GM12878 (cell line): ENCODE measurements at regions of chr17 and their contacts with region 1.

Region 1: GRCh38 chr17:78140169-78140976 is 5.8 kb upstream of the C17orf99 start:
- DNase-seq: peak; percentile 90
- ATAC-seq: peak; percentile 90
- H3K4me3 ChIP-seq: no peak overlapping the region
- H3K27ac ChIP-seq: no peak overlapping the region
- H3K4me1 ChIP-seq: peaks cover 64% of the 10 kb centered on the region
- H3K27me3 ChIP-seq: no peaks in the 10 kb centered on the region
- CTCF ChIP-seq: no peak
- EP300 ChIP-seq: no peak
- POLR2A ChIP-seq: peak; percentile 87
- RAD21 ChIP-seq: no peak

Region 2: DNA sequence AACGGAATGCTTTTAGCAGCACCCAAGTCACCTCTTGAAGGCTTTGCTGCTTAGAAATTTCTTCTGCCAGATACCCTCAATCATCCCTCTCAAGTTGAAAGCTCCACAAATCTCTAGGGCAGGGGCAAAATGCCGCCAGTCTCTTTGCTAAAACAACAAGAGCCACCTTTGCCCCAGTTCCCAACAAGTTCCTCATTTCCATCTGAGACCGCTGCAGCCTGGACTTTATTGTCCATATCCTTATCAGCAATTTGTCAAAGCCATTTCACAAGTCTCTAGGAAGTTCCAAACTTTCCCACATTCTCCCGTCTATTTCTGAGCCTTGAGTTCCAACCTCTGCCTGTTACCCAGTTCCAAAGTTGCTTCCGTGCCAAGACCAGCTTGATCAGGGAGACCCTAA is 39.3 kb before region 1 on chr17:
- CTCF ChIA-PET with region 1: no interaction called
- POLR2A ChIA-PET with region 1: no interaction called
- RAD21 ChIA-PET with region 1: no interaction called
- SMC1A ChIA-PET with region 1: no interaction called
- in situ Hi-C with region 1: no loop called
- intact Hi-C with region 1: no loop called
- DNase-seq: no peak
- ATAC-seq: no peak
- H3K4me3 ChIP-seq: no peak overlapping the region
- H3K27ac ChIP-seq: no peak overlapping the region
- H3K4me1 ChIP-seq: no peaks in the 10 kb centered on the region
- H3K27me3 ChIP-seq: no peaks in the 10 kb centered on the region
- CTCF ChIP-seq: no peak
- EP300 ChIP-seq: no peak
- POLR2A ChIP-seq: no peak
- RAD21 ChIP-seq: no peak

Region 3: DNA sequence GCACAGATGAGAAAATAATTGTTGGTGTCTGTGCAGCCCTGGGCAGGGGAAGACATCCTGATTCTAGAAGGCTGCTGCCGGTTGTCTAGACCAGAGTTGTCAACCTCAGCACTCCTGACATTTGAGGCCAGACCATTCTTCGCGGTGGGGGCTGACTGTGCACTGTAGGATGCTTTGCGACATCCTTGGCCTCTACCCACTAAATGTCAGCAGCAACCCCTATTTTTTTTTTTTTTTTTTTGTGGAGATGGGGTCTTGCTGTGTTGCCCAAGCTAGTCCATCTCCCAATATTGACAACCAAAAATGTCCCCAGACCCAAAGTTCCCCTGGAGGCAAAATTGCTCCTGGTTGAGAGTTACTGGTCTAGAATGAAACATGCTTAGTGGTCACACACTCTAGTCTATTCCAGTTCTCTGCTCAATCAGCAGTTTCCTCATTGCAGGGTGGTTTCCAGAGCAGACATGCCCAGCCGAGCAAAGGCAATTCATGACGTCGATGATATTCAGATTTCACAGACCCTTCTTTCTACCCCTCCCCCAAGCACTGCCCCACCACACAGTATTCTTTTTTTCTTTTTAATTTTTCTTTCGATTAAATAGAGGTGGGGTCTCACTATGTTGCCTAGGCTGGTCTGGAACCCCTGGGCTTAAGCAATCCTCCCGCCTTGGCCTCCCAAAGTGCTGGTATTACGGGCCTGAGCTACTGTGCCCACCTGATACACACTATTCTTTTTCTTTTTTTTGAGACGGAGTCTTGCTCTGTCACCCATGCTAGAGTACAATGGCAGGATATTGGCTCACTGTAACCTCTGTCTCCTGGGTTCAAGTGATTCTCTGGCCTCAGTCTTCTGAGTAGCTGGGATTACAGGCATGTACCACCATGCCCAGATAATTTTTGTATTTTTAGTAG is 14.8 kb after region 1 on chr17:
- CTCF ChIA-PET with region 1: interaction called, 9 read pairs
- POLR2A ChIA-PET with region 1: interaction called, 15 read pairs
- RAD21 ChIA-PET with region 1: interaction called, 29 read pairs
- SMC1A ChIA-PET with region 1: interaction called, 7 read pairs
- in situ Hi-C with region 1: no loop called
- intact Hi-C with region 1: no loop called
- DNase-seq: peak; percentile 97
- ATAC-seq: peak; percentile 80
- H3K4me3 ChIP-seq: no peak overlapping the region
- H3K27ac ChIP-seq: peak overlapping the region; percentile 93
- H3K4me1 ChIP-seq: peaks cover 64% of the 10 kb centered on the region
- H3K27me3 ChIP-seq: no peaks in the 10 kb centered on the region
- CTCF ChIP-seq: no peak
- EP300 ChIP-seq: peak; percentile 61 to 88; a peak in 3 of 4 replicates
- POLR2A ChIP-seq: peak; percentile 76
- RAD21 ChIP-seq: no peak

Region 4: DNA sequence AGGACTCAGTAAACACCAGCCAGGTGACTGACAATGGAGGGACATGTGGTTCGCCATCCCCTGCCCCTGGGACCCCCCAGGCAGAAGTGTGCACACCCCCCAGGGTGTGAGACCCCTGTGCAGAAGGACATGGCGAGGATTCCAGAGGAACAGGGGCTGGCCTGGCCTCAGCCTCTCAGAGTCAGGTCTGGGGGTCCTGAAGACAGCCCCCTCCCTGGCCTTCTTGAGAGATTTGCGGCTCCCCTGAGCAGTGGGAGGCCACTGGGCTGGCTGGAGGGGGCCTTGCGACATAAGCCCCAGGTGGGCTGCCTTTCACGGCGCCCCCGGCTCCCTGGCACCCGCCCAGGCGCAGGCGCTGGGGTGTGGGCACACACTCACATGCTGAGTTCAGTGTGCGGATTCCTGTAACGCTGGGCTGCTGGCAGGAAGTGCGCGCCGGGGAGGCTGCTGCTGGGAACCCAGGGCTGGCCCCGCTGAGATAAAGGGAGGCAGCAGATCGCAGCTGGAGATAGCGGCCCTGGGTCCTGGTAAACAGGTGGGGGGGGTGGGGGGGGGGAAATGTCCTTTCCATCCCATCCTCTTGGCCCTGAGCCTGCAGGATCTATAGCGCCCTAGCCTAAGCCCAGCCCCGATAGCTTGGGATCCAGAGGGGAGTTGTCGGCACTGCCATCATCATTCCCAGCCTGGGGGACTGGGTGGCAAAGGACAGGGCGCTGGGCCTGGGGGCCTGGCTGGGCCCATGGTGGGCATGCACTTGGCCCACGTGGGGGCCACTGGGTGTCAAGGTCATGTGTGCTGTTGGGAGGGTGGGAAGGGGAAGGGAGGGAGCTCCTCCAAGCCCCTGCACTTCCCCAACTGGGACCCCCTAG is 118.2 kb after region 1 on chr17:
- CTCF ChIA-PET with region 1: no interaction called
- POLR2A ChIA-PET with region 1: no interaction called
- RAD21 ChIA-PET with region 1: no interaction called
- SMC1A ChIA-PET with region 1: no interaction called
- in situ Hi-C with region 1: no loop called
- intact Hi-C with region 1: no loop called
- DNase-seq: no peak
- ATAC-seq: no peak
- H3K4me3 ChIP-seq: peak overlapping the region; percentile 5
- H3K27ac ChIP-seq: no peak overlapping the region
- H3K4me1 ChIP-seq: peaks cover 35% of the 10 kb centered on the region
- H3K27me3 ChIP-seq: no peaks in the 10 kb centered on the region
- CTCF ChIP-seq: no peak
- EP300 ChIP-seq: no peak
- POLR2A ChIP-seq: no peak; the same call in 1 of the 2 replicates
- RAD21 ChIP-seq: no peak